Dendritic cell treated with granulocyte-macrophage colony-stimulating factor and Interleukin-4, amounts not matched to agents 40 ng/mL and 50 ng/mL, for 4 days (primary cell): ENCODE measurements at regions of chr1 and their contacts with region 1.

Region 1: DNA sequence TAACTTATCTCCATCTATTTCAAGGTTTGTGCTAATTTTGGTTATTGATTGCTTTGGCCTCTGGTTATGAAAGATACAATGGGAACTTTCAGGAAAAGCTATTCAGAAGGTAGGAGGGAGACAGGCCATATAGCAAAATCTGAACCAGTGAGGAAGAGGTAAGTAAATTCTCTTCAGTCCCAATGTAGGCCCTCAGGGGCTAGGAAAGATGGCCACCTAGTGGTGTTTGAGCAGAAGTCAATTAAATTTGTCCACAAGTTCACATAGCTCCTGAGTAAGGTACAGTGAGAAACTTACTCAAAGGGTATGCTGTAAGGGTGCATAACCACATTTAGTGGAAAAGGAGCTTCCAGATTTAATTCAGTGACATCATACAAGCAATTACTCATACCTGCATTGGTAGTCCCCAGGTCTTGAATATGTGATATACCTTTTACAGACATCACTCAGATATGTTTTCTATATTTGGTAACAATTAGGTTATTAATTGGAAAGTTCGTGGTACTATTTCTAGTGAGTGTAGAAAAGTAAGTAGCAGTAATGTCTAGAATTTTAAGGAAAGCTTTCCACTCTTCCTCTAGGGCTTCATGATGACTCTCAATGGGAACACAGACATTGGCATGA is 21.4 kb upstream of the FMO1 start:
- H3K4me3 Mint-ChIP-seq: no peak overlapping the region
- H3K27ac Mint-ChIP-seq: no peak overlapping the region
- H3K4me1 Mint-ChIP-seq: peaks cover 13% of the 10 kb centered on the region
- H3K27me3 Mint-ChIP-seq: no peaks in the 10 kb centered on the region

Region 2: DNA sequence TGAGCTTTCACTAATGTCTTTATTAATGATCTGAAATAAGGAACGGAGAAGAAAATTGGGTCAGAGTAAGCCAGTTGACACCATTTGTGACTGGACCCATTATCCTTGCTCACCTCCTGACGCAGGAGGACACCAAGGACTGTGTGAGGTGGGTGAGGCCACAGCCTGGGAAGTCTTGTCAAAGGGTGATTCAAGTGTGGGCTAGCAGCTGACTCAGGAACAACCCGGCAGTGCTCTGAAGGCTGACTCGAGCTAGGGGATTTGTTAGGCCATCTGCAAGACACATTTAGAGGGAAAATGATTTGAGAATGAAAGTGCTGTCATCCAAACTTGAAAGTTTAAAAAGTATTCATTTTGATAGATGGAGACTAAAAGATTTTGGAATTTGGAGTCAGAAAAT is 541.7 kb before region 1 on chr1:
- intact Hi-C with region 1: loop called (anchors 5 kb)
- H3K4me3 Mint-ChIP-seq: no peak overlapping the region
- H3K27ac Mint-ChIP-seq: no peak overlapping the region
- H3K4me1 Mint-ChIP-seq: no peaks in the 10 kb centered on the region
- H3K27me3 Mint-ChIP-seq: peaks cover 8% of the 10 kb centered on the region

Region 3: DNA sequence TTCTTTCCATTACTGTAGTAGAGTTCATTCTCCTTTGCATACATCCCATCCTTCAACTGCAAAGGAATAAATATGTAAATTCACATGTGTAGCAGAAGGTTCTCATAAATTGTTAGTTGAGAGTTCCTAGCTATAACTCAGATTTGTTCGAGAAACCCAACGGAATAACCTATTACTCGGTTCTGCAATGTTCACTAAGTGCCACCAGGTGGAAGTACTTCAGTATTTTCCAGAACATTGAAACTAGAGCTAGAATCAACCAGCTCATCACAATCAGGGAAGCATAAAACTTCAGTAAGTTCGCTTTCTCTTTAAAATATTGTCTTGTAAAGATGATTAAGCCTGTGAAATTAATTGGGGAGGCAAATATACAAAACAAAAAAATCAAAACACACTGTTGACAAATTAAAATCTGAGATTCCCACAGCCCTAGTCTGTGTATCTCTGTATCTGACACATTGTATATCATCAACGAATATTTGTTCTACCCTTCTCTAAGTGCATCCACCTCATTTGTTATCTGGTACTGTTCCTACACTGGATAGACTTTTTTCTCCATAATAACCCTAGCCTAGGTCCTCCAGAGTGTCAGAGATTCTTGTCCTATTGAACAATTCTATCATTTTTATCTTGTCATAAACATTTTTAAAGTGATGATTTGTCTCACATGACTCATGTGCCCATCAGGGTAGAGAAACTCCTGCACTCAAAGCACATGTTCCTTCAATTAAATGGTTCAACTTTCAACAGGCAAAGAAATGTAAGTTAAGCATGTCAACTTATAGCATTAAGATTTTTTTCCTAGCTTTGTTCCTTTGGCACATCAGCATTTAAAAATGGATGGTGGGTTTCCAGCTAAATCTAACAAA is 259.6 kb before region 1 on chr1:
- intact Hi-C with region 1: loop called (anchors 1 kb)
- H3K4me3 Mint-ChIP-seq: no peak overlapping the region
- H3K27ac Mint-ChIP-seq: no peak overlapping the region
- H3K4me1 Mint-ChIP-seq: no peaks in the 10 kb centered on the region
- H3K27me3 Mint-ChIP-seq: no peaks in the 10 kb centered on the region

Region 4: GRCh38 chr1:171081314-171081753 is 145.5 kb before region 1 on chr1:
- intact Hi-C with region 1: loop called (anchors 1 kb)
- H3K4me3 Mint-ChIP-seq: no peak overlapping the region
- H3K27ac Mint-ChIP-seq: no peak overlapping the region
- H3K4me1 Mint-ChIP-seq: no peaks in the 10 kb centered on the region
- H3K27me3 Mint-ChIP-seq: no peaks in the 10 kb centered on the region

Region 5: GRCh38 chr1:171251042-171251951 is 24.4 kb after region 1 on chr1:
- intact Hi-C with region 1: no loop called
- H3K4me3 Mint-ChIP-seq: peak overlapping the region; percentile 69
- H3K27ac Mint-ChIP-seq: no peak overlapping the region
- H3K4me1 Mint-ChIP-seq: peaks cover 6% of the 10 kb centered on the region
- H3K27me3 Mint-ChIP-seq: peaks cover 28% of the 10 kb centered on the region

Region 6: GRCh38 chr1:171279678-171280077 is 52.8 kb after region 1 on chr1:
- intact Hi-C with region 1: no loop called
- H3K4me3 Mint-ChIP-seq: no peak overlapping the region
- H3K27ac Mint-ChIP-seq: no peak overlapping the region
- H3K4me1 Mint-ChIP-seq: peaks cover 8% of the 10 kb centered on the region
- H3K27me3 Mint-ChIP-seq: no peaks in the 10 kb centered on the region